Cardiac septum (tissue), 1 donor: ENCODE measurements at regions of chr1 and their contacts with region 1.

Region 1: DNA sequence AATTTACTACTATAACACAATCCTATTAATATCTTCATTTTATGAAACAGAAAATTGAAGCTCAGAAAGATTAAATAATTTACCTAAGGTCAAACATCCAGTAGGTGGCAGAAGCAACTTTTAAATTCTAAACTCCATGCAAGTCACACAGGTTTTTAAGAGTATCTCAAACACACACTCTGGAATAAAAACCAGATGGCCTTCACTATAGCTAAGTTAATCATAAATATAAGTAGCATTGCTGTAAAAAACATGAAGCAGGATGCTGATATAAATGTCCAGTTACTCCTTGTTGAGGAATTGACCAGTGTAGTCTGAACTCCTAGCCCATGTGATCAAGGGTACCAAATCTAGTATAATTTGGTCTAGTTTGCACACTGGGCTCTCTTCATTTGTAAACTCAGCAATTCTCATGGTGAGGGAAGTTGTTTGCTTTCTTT is 9.4 kb upstream of the FMO3 start:
- DNase-seq: no peak

Region 2: DNA sequence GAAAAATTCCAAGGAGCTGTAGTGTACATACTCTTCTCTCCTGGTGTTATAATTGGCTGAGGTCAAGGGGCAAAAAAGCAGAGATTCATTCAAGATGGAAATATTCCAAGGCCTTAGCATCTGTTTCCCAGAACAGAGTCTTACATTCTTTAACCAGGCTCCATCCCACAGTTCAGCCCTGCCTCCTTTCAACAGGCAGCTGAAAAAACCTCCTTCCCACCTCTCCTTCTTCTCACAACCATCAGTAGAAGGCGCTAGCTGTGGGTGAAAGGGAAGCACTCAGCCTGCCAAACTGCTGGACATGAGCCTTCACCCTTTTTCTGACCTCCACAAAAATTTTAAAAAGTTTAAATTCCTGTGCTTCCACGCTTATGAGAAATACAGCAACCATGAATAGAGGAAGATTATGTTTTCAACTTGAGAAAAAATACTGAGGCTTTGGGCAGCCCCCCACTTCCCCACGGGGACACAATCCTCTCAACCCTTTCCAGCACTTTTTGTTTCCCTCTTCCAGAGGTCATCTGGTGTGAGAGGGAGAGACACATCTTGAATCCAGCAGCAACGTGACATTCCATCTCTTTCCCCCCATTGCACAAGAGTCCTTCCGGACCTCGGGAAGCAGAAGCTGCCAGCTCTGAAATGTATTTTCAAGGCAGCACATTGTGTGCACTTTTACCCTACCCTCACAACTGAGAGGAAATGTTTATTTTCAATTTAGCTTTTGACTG is 60.5 kb after region 1 on chr1:
- intact Hi-C with region 1: loop called (anchors 5 kb)
- DNase-seq: no peak

Region 3: DNA sequence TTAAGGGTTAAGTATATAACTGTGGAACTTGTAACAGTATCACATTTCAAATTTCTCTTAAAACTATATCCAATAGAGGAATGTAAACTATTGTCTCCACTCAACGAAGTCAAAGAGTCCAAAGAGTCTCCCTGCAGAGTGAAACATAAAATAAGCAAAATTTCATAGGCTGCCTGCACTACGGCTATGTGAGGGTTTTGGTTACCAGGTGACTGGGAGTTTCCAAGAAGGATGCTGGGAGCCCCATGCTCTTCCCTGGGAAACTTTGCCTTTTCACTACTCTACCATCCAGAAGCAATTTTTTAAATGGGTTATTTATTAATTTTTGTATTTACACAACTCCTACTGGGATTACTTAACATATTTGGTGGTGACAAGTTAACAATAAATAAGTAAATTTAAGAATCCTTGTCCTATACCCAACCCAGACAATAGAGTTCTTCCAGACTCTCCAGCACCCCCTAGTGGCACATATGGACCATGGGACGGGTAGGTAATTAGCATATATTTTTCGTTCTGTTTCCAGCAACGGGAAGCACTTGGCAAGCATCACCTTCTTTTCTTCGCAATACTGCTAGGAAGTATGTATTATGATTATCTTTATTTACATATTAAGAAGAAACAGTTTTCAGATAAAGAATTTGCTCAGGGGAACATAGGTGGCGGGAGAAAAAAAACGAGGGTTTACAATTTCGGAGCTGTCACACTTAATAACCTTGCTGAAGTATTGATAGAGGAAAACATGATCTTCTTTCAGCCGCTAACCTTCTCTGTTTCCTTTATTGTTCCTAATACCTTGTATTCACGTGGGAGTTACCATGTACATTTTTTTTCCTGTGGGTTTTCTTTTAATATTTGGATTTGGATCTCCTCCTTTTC is 107.3 kb after region 1 on chr1:
- intact Hi-C with region 1: loop called (anchors 2 kb)
- DNase-seq: no peak

Region 4: GRCh38 chr1:171226747-171227370 is 145.5 kb after region 1 on chr1:
- intact Hi-C with region 1: loop called (anchors 1 kb)
- DNase-seq: no peak

Region 5: GRCh38 chr1:171313835-171314320 is 232.5 kb after region 1 on chr1 and contains the start of gene FMO4:
- intact Hi-C with region 1: loop called (anchors 5 kb)
- DNase-seq: peak; percentile 88
- total RNA-seq, gene FMO4: 5.3 TPM